ENCODE measurements at regions of chr11 and their contacts with region 1.

Region 1: DNA sequence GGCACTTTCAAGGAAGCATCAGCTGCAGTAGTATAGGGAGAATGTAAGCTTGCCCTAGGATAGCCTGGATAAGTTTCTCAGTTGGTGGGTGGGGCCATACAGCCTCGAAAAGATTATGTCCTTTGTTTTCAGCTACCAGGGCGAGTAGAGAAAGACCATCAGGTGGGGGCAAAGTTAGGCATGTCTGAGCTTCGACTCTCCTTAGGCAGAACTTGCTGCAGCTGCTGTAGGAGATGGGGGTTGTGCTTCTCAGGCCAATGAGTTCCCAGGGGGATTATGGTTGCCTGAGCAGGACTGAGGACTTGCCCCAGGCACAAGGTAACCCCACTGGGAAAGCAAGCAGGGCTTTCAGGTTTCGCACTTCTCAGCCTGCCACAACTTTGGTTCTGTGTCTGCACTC is 173.3 kb upstream of the SESN3 start:
- DNase-seq: no peak
- ATAC-seq: peak; percentile 41
- H3K4me3 ChIP-seq: no peak overlapping the region
- H3K4me3 Mint-ChIP-seq: no peak overlapping the region
- H3K27ac ChIP-seq: no peak overlapping the region
- H3K27ac Mint-ChIP-seq: no peak overlapping the region
- H3K4me1 ChIP-seq: peaks cover 5 to 6% of the 10 kb centered on the region in 2 donors
- H3K4me1 Mint-ChIP-seq: peaks cover 11% of the 10 kb centered on the region
- H3K27me3 ChIP-seq: no peaks in the 10 kb centered on the region
- H3K27me3 Mint-ChIP-seq: no peaks in the 10 kb centered on the region
- CTCF ChIP-seq: no peak

Region 2: GRCh38 chr11:95378111-95378510 is 26.2 kb before region 1 on chr11:
- CTCF ChIA-PET with region 1: no interaction called
- POLR2A ChIA-PET with region 1: no interaction called
- intact Hi-C with region 1: loop called (anchors 1 kb)
- DNase-seq: no peak
- ATAC-seq: no peak
- H3K4me3 ChIP-seq: no peak overlapping the region
- H3K4me3 Mint-ChIP-seq: no peak overlapping the region
- H3K27ac ChIP-seq: no peak overlapping the region
- H3K27ac Mint-ChIP-seq: no peak overlapping the region
- H3K4me1 ChIP-seq: no peaks in the 10 kb centered on the region
- H3K4me1 Mint-ChIP-seq: peaks cover 3% of the 10 kb centered on the region
- H3K27me3 ChIP-seq: no peaks in the 10 kb centered on the region
- H3K27me3 Mint-ChIP-seq: peaks cover 4% of the 10 kb centered on the region
- CTCF ChIP-seq: no peak